A549 (cell line): ENCODE measurements at regions of chr13 and their contacts with region 1.

Region 1: DNA sequence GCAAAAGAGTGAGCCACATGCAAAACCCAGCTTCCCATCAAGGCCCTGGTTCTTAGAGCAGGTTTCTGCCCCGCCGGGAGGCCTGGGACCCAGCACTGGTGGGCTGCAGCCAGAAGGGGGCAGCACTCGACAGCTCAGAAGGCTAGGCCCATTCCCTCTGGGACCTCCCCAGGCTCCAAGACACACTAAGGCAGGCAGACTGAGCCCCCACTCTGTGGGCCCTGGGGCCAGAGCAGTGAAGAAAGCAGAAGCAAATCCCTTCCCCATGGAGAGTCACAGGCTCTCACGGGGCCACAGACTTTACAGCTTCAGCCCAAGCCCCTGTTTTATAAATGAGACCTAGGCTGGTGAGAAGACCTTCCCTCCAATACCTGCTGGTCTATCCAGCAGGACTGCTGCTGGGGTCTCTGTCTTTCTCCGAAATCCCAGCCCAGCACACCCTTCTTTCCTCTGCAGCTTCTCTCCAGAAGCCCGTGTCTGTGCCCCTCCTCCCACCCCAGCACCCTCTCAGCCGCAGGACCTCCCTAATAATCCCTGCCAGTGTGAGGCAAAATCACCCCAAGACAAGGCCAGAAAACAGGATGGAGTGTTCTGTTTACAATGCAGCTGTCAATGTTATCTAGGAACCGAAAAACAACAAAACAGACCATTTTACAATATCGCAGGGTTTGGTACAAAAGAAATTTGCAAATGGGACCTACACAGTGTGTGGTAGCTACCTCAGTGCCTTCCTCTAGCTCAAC is 109.3 kb downstream of the ABCC4 start:
- DNase-seq: peak; percentile 31 to 77
- ATAC-seq: peak; percentile 97 to 98
- H3K4me3 ChIP-seq: no peak overlapping the region
- H3K27ac ChIP-seq: peak overlapping the region; percentile 78 to 86
- H3K4me1 ChIP-seq: peaks cover 41% of the 10 kb centered on the region
- CTCF ChIP-seq: peak; percentile 83
- EP300 ChIP-seq: no peak
- POLR2A ChIP-seq: no peak
- RAD21 ChIP-seq: peak; percentile 90 to 93

Region 2: DNA sequence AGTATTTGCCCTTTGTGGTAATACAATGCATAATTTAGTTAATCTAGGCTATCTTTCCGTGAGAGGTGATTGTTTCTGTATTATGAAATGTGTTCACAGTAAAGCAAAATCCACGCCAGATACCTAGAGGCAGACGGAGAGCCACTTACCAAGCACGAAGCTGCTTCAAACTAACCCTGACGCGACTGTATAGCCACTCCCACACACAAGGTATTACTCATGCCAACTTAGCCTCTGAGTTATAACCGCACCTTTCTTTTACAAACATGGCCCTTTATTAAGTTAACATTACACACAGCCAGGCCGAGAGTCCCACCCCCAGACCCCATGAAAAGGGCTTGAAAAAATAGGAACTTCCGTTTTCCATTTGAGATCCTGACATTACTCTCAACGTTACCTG is 76.5 kb before region 1 on chr13:
- CTCF ChIA-PET with region 1: no interaction called
- POLR2A ChIA-PET with region 1: no interaction called
- DNase-seq: peak; percentile 33 to 94
- ATAC-seq: peak; percentile 93
- H3K4me3 ChIP-seq: peak overlapping the region; percentile 19; the same call in 1 of the 3 replicates
- H3K27ac ChIP-seq: peak overlapping the region; percentile 67 to 70
- H3K4me1 ChIP-seq: peaks cover 60% of the 10 kb centered on the region
- CTCF ChIP-seq: no peak
- EP300 ChIP-seq: 0 out of 5 replicates have a peak, but pooled peaks of 1 of the 2 experiments have one; percentile 15
- POLR2A ChIP-seq: no peak
- RAD21 ChIP-seq: no peak

Region 3: DNA sequence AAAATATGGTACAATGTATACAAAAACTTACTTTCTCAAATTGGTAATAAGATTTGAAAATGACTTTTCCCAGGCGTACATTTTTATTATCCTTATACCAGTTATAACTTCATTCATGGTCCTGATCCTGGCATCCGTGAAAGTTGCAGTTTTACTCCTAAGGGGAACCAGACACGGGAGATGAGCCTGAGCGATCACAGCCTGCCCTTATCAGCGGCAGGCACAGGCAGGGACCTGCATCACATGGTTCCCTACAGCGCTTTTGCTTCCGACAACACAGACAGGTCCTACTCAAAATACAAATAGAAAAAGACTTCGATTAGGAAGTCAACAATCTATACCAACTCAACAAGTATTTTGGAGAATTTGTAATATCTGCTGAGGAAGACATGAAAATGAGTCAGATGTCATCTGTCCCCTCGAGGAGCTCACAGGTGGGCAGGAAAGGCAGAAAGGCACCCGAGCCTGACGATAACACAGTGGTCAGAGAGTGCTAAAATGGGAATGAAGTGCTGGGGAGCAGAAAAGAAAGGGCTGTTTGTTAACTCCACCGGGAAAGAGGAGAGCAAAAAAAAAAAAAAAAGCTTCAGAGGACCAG is 15.9 kb after region 1 on chr13:
- CTCF ChIA-PET with region 1: interaction called, 10 read pairs
- POLR2A ChIA-PET with region 1: no interaction called
- DNase-seq: no peak
- ATAC-seq: no peak
- H3K4me3 ChIP-seq: no peak overlapping the region
- H3K27ac ChIP-seq: no peak overlapping the region
- H3K4me1 ChIP-seq: no peaks in the 10 kb centered on the region
- CTCF ChIP-seq: no peak
- EP300 ChIP-seq: no peak
- POLR2A ChIP-seq: no peak
- RAD21 ChIP-seq: no peak

Region 4: GRCh38 chr13:95289020-95289444 is 97.0 kb after region 1 on chr13:
- CTCF ChIA-PET with region 1: interaction called, 24 read pairs
- POLR2A ChIA-PET with region 1: no interaction called
- DNase-seq: no peak
- ATAC-seq: no peak
- H3K4me3 ChIP-seq: no peak overlapping the region
- H3K27ac ChIP-seq: no peak overlapping the region
- H3K4me1 ChIP-seq: peaks cover under 1% of the 10 kb centered on the region; the same call in 1 of the 3 replicates
- CTCF ChIP-seq: no peak
- EP300 ChIP-seq: no peak
- POLR2A ChIP-seq: no peak
- RAD21 ChIP-seq: no peak

Region 5: DNA sequence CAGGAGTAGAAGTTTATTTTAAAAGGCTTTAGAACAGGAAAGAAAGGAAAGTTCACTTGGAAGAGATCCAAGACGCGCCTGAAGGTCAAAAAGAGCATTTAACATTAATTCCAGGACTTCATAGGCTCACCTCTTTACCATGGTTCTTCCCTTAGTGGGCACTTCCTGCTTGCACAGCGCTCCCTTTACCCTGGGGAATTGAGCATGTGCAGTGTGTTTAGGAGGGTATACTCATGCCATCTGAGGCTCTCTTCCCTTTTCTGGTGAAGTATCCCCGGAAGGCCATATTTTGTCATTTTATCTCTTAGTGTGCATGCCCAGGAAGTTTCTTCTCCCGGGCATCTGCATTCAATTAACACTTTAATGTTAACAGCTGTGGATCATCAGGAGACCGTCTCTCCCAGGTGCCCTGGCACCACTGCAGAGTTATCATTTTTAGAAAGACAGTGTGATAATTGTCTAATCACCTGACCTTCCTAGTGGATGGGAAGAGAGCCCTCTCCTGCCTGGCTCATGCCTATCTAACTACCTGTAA is 175.4 kb after region 1 on chr13:
- CTCF ChIA-PET with region 1: interaction called, 15 read pairs
- POLR2A ChIA-PET with region 1: no interaction called
- DNase-seq: no peak
- ATAC-seq: no peak
- H3K4me3 ChIP-seq: no peak overlapping the region
- H3K27ac ChIP-seq: no peak overlapping the region
- H3K4me1 ChIP-seq: no peaks in the 10 kb centered on the region
- CTCF ChIP-seq: no peak
- EP300 ChIP-seq: no peak
- POLR2A ChIP-seq: no peak
- RAD21 ChIP-seq: no peak

Region 6: DNA sequence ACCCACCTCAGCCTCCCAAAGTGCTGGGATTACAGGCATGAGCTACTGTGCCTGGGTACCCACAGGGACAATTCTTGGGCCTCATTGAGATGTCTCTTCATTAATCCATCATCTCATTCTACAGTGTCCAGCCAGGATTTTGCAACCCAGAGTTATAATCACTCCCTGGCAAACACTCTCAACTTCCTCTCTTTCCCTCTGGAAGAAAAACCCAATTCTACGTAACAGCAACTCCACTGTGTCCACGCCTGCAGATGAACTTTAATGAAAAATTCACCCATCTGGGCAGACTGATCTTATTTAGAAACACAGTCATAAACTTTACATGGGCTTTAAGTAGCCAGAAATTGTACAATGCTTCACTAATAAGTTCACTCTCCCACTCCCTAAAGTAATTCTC is 199.4 kb after region 1 on chr13:
- CTCF ChIA-PET with region 1: interaction called, 19 read pairs
- POLR2A ChIA-PET with region 1: no interaction called
- DNase-seq: no peak
- ATAC-seq: no peak
- H3K4me3 ChIP-seq: no peak overlapping the region
- H3K27ac ChIP-seq: no peak overlapping the region
- H3K4me1 ChIP-seq: no peaks in the 10 kb centered on the region
- CTCF ChIP-seq: no peak
- EP300 ChIP-seq: no peak
- POLR2A ChIP-seq: no peak
- RAD21 ChIP-seq: no peak

Region 7: DNA sequence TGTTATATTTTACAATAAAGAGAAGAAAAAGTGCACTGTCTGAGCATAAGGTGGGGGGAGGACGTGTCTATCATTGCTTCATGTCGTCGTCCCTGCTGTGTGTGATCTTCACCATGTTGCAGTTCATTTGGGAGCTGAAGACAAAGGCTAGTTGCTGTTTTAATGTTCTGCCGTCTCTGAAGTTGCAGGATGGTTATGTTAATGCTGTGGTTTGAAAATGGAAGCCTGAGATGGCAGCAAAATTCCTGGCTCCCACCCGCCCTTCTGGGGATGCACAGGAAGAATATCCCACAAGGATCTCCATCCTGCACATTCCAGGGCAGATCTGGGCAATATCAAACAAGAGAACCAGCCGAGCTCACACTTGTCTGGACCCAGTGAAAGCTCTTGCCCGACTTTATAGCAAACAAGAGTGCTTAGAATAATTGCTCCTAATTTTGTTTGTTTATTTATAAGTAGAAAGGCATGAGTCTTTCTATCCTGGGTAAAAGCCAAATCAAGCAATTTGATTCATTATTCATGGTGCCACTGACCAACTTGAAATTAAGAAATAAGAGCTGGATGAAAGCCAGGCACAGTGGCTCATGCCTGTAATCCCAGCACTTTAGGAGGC is 219.5 kb after region 1 on chr13:
- CTCF ChIA-PET with region 1: interaction called, 230 read pairs
- POLR2A ChIA-PET with region 1: no interaction called
- DNase-seq: no peak
- ATAC-seq: no peak
- H3K4me3 ChIP-seq: no peak overlapping the region
- H3K27ac ChIP-seq: no peak overlapping the region
- H3K4me1 ChIP-seq: no peaks in the 10 kb centered on the region
- CTCF ChIP-seq: no peak
- EP300 ChIP-seq: no peak
- POLR2A ChIP-seq: no peak
- RAD21 ChIP-seq: no peak